IMR-90 (cell line): ENCODE measurements at regions of chr18 and their contacts with region 1.

Region 1: DNA sequence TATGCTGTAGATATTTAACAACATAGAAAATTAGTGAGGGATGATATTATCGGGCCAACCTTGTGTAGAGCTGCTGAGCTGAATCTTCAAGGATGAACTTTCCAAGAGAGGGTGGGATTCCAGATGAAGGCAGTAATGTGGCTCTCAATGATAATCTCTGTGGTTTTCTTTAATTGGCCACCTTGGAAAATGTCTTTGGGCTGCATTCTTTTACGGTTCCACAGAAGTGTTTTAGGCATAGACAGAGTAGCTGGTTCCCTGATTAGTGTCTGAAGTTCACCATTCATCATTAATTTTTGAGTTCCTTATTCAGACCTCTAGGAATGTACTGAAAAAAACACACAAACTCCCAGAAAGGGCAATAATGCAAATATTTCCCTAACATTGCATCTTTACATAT is 1566.9 kb upstream of the PIK3C3 start:
- DNase-seq: no peak
- ATAC-seq: no peak
- H3K4me3 ChIP-seq: no peak overlapping the region
- H3K27ac ChIP-seq: no peak overlapping the region
- H3K4me1 ChIP-seq: no peaks in the 10 kb centered on the region
- H3K27me3 ChIP-seq: no peaks in the 10 kb centered on the region
- CTCF ChIP-seq: no peak
- POLR2A ChIP-seq: no peak
- RAD21 ChIP-seq: no peak

Region 2: GRCh38 chr18:40447820-40448219 is 59.7 kb after region 1 on chr18:
- CTCF ChIA-PET with region 1: no interaction called
- POLR2A ChIA-PET with region 1: no interaction called
- dilution Hi-C with region 1: no loop called
- in situ Hi-C with region 1: no loop called
- intact Hi-C with region 1: no loop called
- DNase-seq: no peak
- ATAC-seq: no peak
- H3K4me3 ChIP-seq: no peak overlapping the region
- H3K27ac ChIP-seq: no peak overlapping the region
- H3K4me1 ChIP-seq: no peaks in the 10 kb centered on the region
- H3K27me3 ChIP-seq: no peaks in the 10 kb centered on the region
- CTCF ChIP-seq: no peak
- POLR2A ChIP-seq: no peak
- RAD21 ChIP-seq: no peak

Region 3: GRCh38 chr18:41135146-41135545 is 747.0 kb after region 1 on chr18:
- CTCF ChIA-PET with region 1: no interaction called
- POLR2A ChIA-PET with region 1: interaction called, 15 read pairs
- dilution Hi-C with region 1: no loop called
- in situ Hi-C with region 1: no loop called
- intact Hi-C with region 1: no loop called
- DNase-seq: no peak
- ATAC-seq: no peak
- H3K4me3 ChIP-seq: no peak overlapping the region
- H3K27ac ChIP-seq: no peak overlapping the region
- H3K4me1 ChIP-seq: peaks cover 2% of the 10 kb centered on the region; the same call in 1 of the 2 replicates
- H3K27me3 ChIP-seq: no peaks in the 10 kb centered on the region
- CTCF ChIP-seq: no peak
- POLR2A ChIP-seq: no peak
- RAD21 ChIP-seq: no peak